ENCODE measurements at regions of chr15 and their contacts with region 1.

Region 1: GRCh38 chr15:84658080-84658787 is at the start of gene NMB:
- DNase-seq: peak; percentile 90
- total RNA-seq, gene NMB: 2.6 TPM

Region 2: DNA sequence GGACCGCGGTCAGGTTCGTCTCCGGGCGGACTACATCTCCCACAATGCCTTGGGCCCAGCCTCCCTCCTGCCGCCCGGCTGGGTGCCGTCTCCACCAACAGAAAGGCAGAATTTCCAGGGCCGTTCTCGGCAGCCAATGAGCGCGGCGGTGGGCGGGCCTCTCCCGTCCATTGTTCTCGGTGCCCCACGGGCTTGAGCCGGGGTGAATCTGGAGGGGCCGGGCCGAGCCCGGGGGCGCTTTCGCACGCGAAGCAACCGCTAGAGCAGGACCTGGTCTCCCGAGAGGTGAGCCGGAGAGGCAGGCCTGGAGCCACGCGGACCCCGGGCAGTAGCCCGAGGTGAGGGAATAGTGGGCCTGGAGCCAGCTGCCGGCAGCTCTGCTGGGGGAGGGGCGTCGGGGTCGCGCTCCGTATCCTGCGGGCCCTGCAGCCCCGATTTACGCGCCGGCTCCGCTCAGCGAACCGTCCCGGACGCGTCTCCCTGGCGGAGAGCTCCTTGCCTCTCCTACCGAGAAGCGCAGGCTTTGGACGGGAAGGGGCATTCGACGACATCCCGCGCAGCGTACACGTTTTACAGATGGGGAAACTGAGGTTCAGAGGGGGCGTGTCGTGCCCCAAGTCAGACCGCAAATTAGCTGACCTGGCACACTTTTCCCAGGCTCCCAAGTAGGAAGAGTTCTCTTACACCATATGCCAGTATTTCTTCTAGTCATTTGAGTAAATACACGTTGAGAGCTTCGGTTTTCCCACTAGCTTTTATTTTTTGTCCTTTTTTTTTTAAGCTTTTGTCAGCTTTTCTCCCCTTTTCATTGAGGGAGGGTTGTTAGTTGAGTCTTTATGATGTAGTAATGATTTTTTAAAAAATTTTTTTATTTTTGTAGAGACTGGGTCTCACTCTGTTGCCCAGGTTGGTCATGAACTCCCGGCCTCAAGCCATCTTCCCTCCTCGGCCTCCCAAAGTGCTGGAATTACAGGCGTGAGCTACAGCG is 57.1 kb before region 1 on chr15 and contains the start of gene ZSCAN2:
- intact Hi-C with region 1: loop called (anchors 2 kb)
- DNase-seq: peak; percentile 98
- total RNA-seq, gene ZSCAN2: 4.6 TPM

Region 3: GRCh38 chr15:84621358-84621979 is 36.8 kb before region 1 on chr15:
- intact Hi-C with region 1: no loop called
- DNase-seq: peak; percentile 46

Region 4: GRCh38 chr15:84716036-84716799 is 58.0 kb after region 1 on chr15 and contains the start of gene SEC11A:
- intact Hi-C with region 1: loop called (anchors 10 kb)
- DNase-seq: peak; percentile 98
- total RNA-seq, gene SEC11A: 63.8 TPM

Region 5: GRCh38 chr15:84818261-84819131 is 160.3 kb after region 1 on chr15:
- intact Hi-C with region 1: loop called (anchors 5 kb)
- DNase-seq: no peak

Region 6: DNA sequence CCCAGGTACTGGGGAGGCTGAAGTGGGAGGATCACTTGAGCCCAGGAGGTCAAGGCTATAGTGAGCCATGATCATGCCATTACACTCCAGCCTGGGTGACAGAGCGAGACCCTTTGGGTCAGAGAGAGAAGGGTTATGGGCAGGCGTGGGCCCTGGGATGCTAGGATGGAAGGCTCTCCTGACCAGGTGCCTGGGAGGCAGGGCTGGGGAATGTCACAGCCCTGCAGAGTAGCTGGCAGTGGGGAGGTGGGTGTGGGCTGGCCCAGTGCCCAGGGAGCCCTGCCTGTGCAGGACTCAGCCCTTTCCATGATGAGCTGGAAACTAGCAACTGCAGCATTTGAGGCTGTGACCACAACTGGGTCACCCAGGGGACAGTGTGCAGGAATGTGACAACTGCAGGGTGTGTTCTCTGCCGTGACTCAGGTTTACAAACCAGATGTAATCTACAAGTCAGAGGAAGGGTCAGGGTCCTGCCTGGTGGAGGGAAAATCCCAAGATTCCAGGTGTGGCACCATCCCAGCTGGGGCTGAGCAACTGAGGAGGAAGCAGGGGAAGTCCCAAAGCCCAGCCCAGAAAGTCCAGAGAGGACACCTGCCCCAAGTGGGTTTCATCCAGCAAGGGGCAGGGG is 271.6 kb after region 1 on chr15:
- intact Hi-C with region 1: loop called (anchors 5 kb)
- DNase-seq: no peak

Measured in cardiac septum (tissue), 1 donor.